ENCODE measurements at regions of chr5 and their contacts with region 1.

Region 1: DNA sequence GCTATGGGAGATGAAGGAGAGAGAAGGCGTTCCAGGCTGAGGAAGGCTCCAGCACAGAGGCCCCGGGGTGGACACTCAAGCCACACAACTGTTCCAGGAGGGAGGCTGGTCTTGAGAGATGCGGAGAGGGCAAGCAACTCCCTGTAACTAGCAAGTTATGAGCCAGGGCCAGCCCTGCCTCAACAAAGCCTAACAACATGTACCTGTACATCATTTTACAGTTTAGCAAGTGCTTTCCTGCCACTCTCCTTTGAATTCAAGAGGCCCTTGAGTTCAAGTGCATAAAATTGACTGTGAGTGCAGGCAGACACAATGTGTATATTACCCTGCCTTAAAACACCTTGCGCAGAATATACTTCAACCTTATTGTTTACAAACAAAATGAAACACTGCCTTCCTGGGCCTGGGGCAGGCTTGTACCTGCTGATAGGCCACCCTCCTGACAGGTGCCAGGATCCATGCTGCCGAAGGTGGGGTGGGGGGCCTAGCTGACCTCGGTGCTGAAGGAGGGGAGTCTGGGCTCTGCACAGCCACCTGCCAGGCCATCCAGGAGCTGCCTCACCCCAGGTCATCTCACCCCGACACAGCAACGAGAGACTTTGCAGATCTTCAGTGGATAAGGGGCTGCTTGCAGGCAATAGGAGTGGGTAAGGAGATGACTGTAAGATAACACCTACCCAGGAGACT is 80.0 kb downstream of the PPARGC1B start:
- DNase-seq: no peak
- ATAC-seq: no peak
- H3K4me3 ChIP-seq: no peak overlapping the region
- H3K27ac ChIP-seq: no peak overlapping the region
- H3K4me1 ChIP-seq: peaks cover 10% of the 10 kb centered on the region
- H3K27me3 ChIP-seq: peaks cover 28% of the 10 kb centered on the region
- CTCF ChIP-seq: no peak
- POLR2A ChIP-seq: no peak
- RAD21 ChIP-seq: no peak

Region 2: GRCh38 chr5:149873896-149874295 is 63.8 kb after region 1 on chr5:
- CTCF ChIA-PET with region 1: no interaction called
- POLR2A ChIA-PET with region 1: interaction called, 10 read pairs
- dilution Hi-C with region 1: no loop called
- in situ Hi-C with region 1: no loop called
- intact Hi-C with region 1: no loop called
- DNase-seq: no peak
- ATAC-seq: no peak
- H3K4me3 ChIP-seq: no peak overlapping the region
- H3K27ac ChIP-seq: no peak overlapping the region
- H3K4me1 ChIP-seq: no peaks in the 10 kb centered on the region
- H3K27me3 ChIP-seq: peaks cover 59% of the 10 kb centered on the region
- CTCF ChIP-seq: no peak
- POLR2A ChIP-seq: no peak
- RAD21 ChIP-seq: no peak